Dendritic cell treated with granulocyte-macrophage colony-stimulating factor and Interleukin-4, amounts not matched to agents 40 ng/mL and 50 ng/mL, for 4 days (primary cell): ENCODE measurements at regions of chr20 and their contacts with region 1.

Region 1: DNA sequence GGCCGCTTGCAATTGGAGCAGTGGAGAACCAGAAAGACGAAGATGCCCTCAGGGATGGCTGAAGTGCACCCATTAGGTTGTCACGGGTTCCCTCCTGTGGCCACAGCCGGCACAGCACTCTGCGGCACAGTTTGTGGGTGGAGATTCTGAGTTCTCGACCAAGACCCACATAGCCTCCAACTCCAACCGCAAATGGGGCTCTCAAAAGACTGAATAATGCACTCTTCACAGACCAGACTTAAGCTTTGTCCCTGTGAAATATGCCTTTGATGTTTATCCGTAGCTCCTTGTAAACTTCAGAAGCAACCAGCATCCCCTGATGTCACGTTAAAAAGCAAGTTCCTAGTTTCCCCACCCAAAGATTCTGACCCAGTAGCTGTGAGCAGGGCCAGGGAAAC is 934 bp upstream of the CST9 start:
- H3K4me3 Mint-ChIP-seq: no peak overlapping the region
- H3K27ac Mint-ChIP-seq: no peak overlapping the region
- H3K4me1 Mint-ChIP-seq: peaks cover 34% of the 10 kb centered on the region
- H3K27me3 Mint-ChIP-seq: peaks cover 27% of the 10 kb centered on the region

Region 2: DNA sequence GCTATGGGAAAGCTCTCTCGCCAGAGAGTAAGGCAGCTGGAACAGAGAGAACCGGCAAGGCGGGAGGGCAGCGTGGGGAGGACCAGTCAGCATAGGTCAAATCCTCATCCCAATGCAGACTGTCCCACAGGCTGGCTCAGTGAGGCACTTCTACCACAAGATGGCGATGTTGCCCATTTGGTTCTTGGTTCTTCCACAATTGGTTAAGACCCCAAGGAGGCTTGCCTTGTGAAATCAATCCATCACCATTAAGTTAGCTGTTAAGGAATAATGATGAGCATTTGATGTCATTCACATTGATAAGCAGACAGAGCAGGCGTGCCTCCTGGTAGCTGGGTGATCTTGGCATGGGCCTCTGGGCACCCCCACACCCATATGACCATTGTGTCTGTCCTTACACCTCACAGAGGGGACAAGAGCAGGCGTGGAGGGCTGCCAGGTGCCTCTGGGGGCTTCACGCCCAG is 164.8 kb before region 1 on chr20:
- intact Hi-C with region 1: loop called (anchors 1 kb)
- H3K4me3 Mint-ChIP-seq: no peak overlapping the region
- H3K27ac Mint-ChIP-seq: no peak overlapping the region
- H3K4me1 Mint-ChIP-seq: no peaks in the 10 kb centered on the region
- H3K27me3 Mint-ChIP-seq: peaks cover 3% of the 10 kb centered on the region